Activated CD4-positive, alpha-beta memory T cell treated with anti-CD3 and anti-CD28 coated beads for 36 hours (primary cell): ENCODE measurements at regions of chr14 and their contacts with region 1.

Region 1: DNA sequence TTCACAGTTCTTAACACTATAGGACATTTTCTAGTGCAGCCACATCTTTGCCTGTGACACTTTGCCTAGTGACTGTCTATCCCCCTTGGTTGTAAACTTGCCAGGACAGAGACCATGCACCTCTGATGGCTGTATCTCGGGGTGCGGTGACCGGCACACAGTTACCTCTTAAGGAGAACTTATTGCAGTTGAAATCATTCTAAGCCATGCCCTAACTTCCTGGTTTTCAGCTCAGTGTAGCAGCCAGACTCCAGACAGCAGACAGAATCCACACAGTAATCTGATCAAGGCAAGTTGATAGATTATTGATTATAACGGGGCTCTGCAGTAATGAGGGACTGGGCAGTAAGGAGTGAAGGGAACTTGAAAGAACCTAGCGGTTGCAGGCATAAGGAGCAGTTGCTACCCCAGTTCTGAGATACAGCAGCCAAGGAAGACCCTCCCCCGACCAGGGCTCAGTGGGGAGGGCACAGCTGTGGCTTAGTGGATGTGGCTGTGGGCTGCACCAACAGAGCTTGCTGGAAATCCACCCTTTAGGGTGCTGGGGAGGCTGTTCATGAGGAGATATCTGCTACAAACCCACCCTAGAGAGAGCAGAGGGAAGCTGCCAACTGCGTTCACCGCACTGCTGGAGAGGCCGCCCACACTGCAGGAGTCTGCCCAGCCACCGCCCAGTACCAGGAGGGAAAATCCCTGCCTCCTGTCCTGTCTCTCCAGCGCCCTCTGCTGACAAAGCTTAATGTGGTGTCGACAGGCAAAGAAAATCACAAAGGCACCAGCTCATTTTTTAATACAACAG is 58.2 kb upstream of the BEGAIN start:
- DNase-seq: peak; percentile 92
- H3K4me3 Mint-ChIP-seq: no peak overlapping the region
- H3K27ac Mint-ChIP-seq: no peak overlapping the region
- H3K4me1 Mint-ChIP-seq: peaks cover 41% of the 10 kb centered on the region
- H3K27me3 Mint-ChIP-seq: no peaks in the 10 kb centered on the region

Region 2: DNA sequence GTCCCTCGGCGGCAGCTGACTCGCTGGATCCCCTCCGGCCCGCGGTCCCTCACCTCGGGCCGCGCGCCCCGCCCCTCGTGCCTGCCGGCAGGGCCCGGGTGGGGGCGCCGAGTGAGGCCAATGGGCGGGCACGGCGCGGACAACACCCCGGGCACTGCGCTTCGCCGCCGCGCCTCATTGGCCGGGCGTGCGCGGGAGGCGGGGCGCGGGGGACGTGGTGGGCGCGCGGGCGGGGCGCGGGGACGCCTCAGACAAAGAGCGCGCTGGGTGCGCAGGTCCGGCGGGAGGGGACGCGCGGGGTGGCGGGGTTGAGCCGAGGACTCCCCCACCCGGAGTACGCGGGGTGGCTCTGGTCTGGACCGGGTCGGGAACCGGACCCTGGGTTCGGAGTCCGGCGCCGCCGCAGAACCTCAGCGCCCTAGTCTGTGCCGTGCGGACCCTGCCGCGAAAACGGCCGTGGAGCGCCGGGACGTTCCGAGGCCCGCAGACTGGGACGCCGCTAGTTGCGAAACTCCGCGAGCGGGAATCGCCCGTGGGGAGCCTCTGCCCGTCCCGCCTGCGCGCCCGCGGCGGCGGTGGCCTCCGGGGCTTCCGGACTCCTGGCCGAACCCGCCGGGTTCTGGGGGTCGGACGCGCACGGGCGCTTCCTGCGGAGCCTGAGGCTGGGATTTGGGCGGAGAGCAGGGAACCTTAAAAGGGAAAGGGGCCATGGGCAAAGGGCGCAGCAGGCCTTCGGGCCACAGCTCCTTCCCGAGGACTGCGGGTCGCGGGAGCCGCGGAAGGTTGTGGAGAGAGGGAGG is 338.8 kb before region 1 on chr14 and contains the start of gene SLC25A29:
- CTCF ChIA-PET with region 1: interaction called, 7 read pairs
- POLR2A ChIA-PET with region 1: no interaction called
- intact Hi-C with region 1: loop called (anchors 10 kb)
- DNase-seq: peak; percentile 79
- H3K4me3 Mint-ChIP-seq: peak within 1 kb of the TSS; percentile 70
- H3K27ac Mint-ChIP-seq: no peak within 1 kb of the TSS
- H3K4me1 Mint-ChIP-seq: peaks cover 10% of the 10 kb centered on the region
- H3K27me3 Mint-ChIP-seq: peaks cover 6% of the 10 kb centered on the region
- total RNA-seq, gene SLC25A29: 14.9 to 15.7 TPM

Region 3: DNA sequence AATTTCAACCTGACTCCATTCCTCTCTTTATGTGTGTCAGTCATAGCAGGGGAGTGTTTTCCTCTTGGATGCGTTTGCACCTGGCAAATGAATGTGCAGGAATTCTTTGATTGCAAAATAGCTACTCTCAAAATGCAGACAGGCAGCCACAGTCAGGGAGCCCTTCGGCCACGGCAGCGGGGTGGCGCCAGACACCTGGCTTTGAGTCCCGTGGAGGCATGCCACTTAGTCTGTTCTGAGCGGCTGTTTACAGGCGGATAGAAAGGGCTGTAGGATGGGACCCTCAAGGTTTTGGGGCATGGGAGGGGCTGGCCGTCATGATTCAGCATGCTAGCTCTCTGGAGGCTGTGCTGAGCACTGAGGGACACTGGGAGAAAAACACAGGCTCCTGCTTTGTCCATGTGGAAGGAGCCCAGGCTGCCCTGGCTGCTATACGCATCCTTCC is 205.2 kb before region 1 on chr14:
- CTCF ChIA-PET with region 1: interaction called, 25 read pairs
- POLR2A ChIA-PET with region 1: no interaction called
- intact Hi-C with region 1: loop called (anchors 5 kb)
- DNase-seq: peak; percentile 49
- H3K4me3 Mint-ChIP-seq: no peak overlapping the region
- H3K27ac Mint-ChIP-seq: no peak overlapping the region
- H3K4me1 Mint-ChIP-seq: peaks cover 15% of the 10 kb centered on the region
- H3K27me3 Mint-ChIP-seq: no peaks in the 10 kb centered on the region

Region 4: GRCh38 chr14:100547633-100548294 is 97.6 kb before region 1 on chr14:
- CTCF ChIA-PET with region 1: interaction called, 12 read pairs
- POLR2A ChIA-PET with region 1: no interaction called
- intact Hi-C with region 1: loop called (anchors 1 kb)
- DNase-seq: peak; percentile 53
- H3K4me3 Mint-ChIP-seq: no peak overlapping the region
- H3K27ac Mint-ChIP-seq: no peak overlapping the region
- H3K4me1 Mint-ChIP-seq: peaks cover 26% of the 10 kb centered on the region
- H3K27me3 Mint-ChIP-seq: no peaks in the 10 kb centered on the region

Region 5: GRCh38 chr14:100617410-100618317 is 27.7 kb before region 1 on chr14:
- CTCF ChIA-PET with region 1: interaction called, 13 read pairs
- POLR2A ChIA-PET with region 1: no interaction called
- intact Hi-C with region 1: no loop called
- DNase-seq: no peak
- H3K4me3 Mint-ChIP-seq: no peak overlapping the region
- H3K27ac Mint-ChIP-seq: peak overlapping the region; percentile 35
- H3K4me1 Mint-ChIP-seq: peaks cover 16% of the 10 kb centered on the region
- H3K27me3 Mint-ChIP-seq: no peaks in the 10 kb centered on the region

Region 6: GRCh38 chr14:100662879-100663760 is 17.7 kb after region 1 on chr14:
- CTCF ChIA-PET with region 1: interaction called, 58 read pairs
- POLR2A ChIA-PET with region 1: no interaction called
- intact Hi-C with region 1: no loop called
- DNase-seq: peak; percentile 72
- H3K4me3 Mint-ChIP-seq: no peak overlapping the region
- H3K27ac Mint-ChIP-seq: no peak overlapping the region
- H3K4me1 Mint-ChIP-seq: peaks cover 2% of the 10 kb centered on the region
- H3K27me3 Mint-ChIP-seq: peaks cover 12% of the 10 kb centered on the region

Region 7: DNA sequence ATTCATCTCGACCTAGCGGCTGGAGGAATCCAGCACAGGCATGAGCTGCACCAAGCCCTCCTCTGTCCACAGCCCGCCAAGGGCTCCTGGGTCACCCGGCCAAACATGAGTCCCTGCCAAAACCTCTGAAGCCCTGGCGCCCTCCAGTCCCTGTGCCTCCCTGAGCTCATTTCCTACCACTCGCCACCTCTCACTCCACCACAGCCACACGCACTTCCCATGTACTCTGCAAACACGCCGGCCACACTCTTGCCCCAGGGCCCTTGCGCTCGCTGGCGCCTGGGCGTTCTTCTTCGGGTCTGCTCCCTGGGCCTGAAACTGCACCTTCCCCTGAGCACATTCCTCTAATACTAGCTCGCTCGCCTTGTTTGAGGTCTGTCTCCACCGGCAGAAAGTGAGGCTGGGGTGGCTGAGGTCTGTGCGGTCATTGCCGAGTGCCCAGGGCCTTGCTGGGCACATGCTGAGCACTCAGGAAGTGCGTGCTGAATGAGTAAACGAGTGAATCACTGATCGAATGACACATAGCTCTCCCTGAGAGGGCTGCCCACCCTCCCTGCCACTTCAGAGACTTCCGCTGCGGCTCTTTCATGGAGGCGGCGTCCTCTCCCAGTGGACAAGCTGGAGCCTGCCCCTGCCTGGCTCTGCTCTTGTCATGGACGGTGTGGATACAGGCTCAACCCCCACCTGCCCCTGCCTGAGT is 47.6 kb after region 1 on chr14:
- CTCF ChIA-PET with region 1: no interaction called
- POLR2A ChIA-PET with region 1: no interaction called
- intact Hi-C with region 1: no loop called
- DNase-seq: no peak
- H3K4me3 Mint-ChIP-seq: no peak overlapping the region
- H3K27ac Mint-ChIP-seq: no peak overlapping the region
- H3K4me1 Mint-ChIP-seq: no peaks in the 10 kb centered on the region
- H3K27me3 Mint-ChIP-seq: peaks cover 5% of the 10 kb centered on the region

Region 8: DNA sequence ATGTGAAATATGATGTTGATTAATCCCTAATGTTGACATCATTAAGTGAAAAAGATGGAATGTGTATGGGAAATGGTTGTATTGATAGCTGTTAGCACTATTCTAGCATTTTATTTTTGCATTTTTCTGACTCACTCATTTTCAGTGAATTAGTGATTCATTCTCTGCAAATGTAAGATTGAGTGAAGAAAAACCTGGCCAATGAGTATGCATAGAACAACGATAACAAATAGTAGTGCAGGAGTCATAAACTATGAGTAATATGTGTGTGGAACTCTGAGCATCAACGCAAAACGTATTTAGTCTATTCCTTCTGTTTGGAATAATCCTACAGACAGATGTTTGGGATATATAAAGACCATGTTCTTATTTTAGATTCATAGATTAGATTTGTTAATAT is 334.4 kb after region 1 on chr14:
- CTCF ChIA-PET with region 1: no interaction called
- POLR2A ChIA-PET with region 1: no interaction called
- intact Hi-C with region 1: no loop called
- DNase-seq: no peak
- H3K4me3 Mint-ChIP-seq: no peak overlapping the region
- H3K27ac Mint-ChIP-seq: no peak overlapping the region
- H3K4me1 Mint-ChIP-seq: no peaks in the 10 kb centered on the region
- H3K27me3 Mint-ChIP-seq: peaks cover 9% of the 10 kb centered on the region